HEK293 (cell line): ENCODE measurements at regions of chr1 and their contacts with region 1.

Region 1: GRCh38 chr1:6579374-6580118 is at the start of gene ZBTB48:
- H3K4me3 ChIP-seq: peak within 1 kb of the TSS; percentile 96
- H3K27ac ChIP-seq: peak within 1 kb of the TSS; percentile 38; the same call in 1 of the 2 replicates
- H3K4me1 ChIP-seq: peaks cover 9% of the 10 kb centered on the region
- CTCF ChIP-seq: no peak

Region 2: GRCh38 chr1:6535214-6535613 is 44.3 kb before region 1 on chr1:
- CTCF ChIA-PET with region 1: no interaction called
- POLR2A ChIA-PET with region 1: no interaction called
- H3K4me3 ChIP-seq: no peak overlapping the region
- H3K27ac ChIP-seq: no peak overlapping the region
- H3K4me1 ChIP-seq: no peaks in the 10 kb centered on the region
- CTCF ChIP-seq: no peak

Region 3: GRCh38 chr1:6554031-6554906 is 25.3 kb before region 1 on chr1 and contains the start of gene NOL9:
- CTCF ChIA-PET with region 1: interaction called, 10 read pairs
- POLR2A ChIA-PET with region 1: interaction called, 24 read pairs
- H3K4me3 ChIP-seq: peak within 1 kb of the TSS; percentile 100
- H3K27ac ChIP-seq: peak within 1 kb of the TSS; percentile 60
- H3K4me1 ChIP-seq: no peaks in the 10 kb centered on the region
- CTCF ChIP-seq: peak; percentile 93

Region 4: GRCh38 chr1:6591222-6591621 is 11.7 kb after region 1 on chr1:
- CTCF ChIA-PET with region 1: no interaction called
- POLR2A ChIA-PET with region 1: interaction called, 13 read pairs
- H3K4me3 ChIP-seq: no peak overlapping the region
- H3K27ac ChIP-seq: no peak overlapping the region
- H3K4me1 ChIP-seq: no peaks in the 10 kb centered on the region
- CTCF ChIP-seq: no peak

Region 5: GRCh38 chr1:6602669-6603237 is 23.2 kb after region 1 on chr1 and contains the start of gene KLHL21:
- CTCF ChIA-PET with region 1: interaction called, 3 read pairs
- POLR2A ChIA-PET with region 1: interaction called, 25 read pairs
- H3K4me3 ChIP-seq: peak within 1 kb of the TSS; percentile 58
- H3K27ac ChIP-seq: peak within 1 kb of the TSS; percentile 82
- H3K4me1 ChIP-seq: no peaks in the 10 kb centered on the region
- CTCF ChIP-seq: no peak

Region 6: DNA sequence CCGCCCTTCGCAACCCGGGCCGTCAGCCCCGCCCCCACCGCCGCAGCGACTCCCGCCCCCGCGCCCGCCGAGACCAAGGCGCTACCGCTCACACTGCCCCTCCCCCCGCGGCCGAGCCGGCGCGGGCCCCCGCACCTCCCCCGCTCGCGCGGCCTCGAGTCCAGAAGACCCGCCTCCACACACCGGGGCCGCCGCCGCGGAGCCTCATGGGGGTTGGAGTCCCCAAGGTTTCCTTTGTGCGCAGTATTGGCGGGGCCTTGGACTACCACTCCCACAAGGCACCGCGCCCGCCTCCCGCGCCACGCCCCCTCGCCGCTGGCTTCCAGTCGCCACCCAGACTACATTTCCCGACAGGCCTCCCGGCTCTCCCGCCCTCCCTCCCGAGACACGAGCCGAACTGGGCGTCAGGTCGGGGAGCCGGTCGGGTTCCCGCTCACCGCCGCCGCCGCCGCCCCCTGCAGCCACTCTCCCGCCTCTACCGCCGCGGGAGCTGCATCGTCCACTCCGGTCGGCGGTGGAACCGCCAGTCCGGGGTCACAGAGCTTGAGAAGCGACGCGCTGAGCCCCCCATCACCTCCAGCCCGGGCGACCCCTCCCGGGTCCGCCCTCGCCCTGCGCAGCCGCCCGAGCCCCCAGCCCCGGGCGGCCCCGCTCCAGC is 33.9 kb after region 1 on chr1 and contains the start of gene PHF13:
- CTCF ChIA-PET with region 1: interaction called, 3 read pairs
- POLR2A ChIA-PET with region 1: interaction called, 10 read pairs
- H3K4me3 ChIP-seq: peak within 1 kb of the TSS; percentile 88
- H3K27ac ChIP-seq: peak within 1 kb of the TSS; percentile 91
- H3K4me1 ChIP-seq: peaks cover 3% of the 10 kb centered on the region; the same call in 1 of the 2 replicates
- CTCF ChIP-seq: no peak

Region 7: GRCh38 chr1:6935361-6935883 is 355.9 kb after region 1 on chr1:
- CTCF ChIA-PET with region 1: no interaction called
- POLR2A ChIA-PET with region 1: no interaction called
- H3K4me3 ChIP-seq: no peak overlapping the region
- H3K27ac ChIP-seq: no peak overlapping the region
- H3K4me1 ChIP-seq: no peaks in the 10 kb centered on the region
- CTCF ChIP-seq: no peak